Thyroid gland (tissue), 4 donors: ENCODE measurements at regions of chr16 and their contacts with region 1.

Region 1: GRCh38 chr16:4957720-4958509 is at the start of gene SEC14L5:
- DNase-seq: peak; percentile 99
- H3K4me3 ChIP-seq: peak within 1 kb of the TSS in 1 of 3 donors; percentile 18
- H3K27ac ChIP-seq: peak within 1 kb of the TSS in 1 of 3 donors; percentile 19
- H3K4me1 ChIP-seq: peaks cover 4 to 5% of the 10 kb centered on the region in 2 donors
- H3K27me3 ChIP-seq: no peaks in the 10 kb centered on the region
- CTCF ChIP-seq: no peak
- POLR2A ChIP-seq: peak in 1 of 2 donors; percentile 57
- total RNA-seq, gene SEC14L5: 0.11 to 0.33 (median 0.21) TPM

Region 2: GRCh38 chr16:4734063-4734729 is 223.7 kb before region 1 on chr16 and contains the starts of genes ANKS3 and DNAAF8:
- intact Hi-C with region 1: loop called (anchors 10 kb)
- DNase-seq: peak; percentile 98
- H3K4me3 ChIP-seq: peak within 1 kb of the TSS; percentile 77 to 90 (median 86)
- H3K27ac ChIP-seq: peak within 1 kb of the TSS in 2 of 3 donors; percentile 28 to 61
- H3K4me1 ChIP-seq: peaks cover 0 to 9% of the 10 kb centered on the region in 2 donors
- H3K27me3 ChIP-seq: no peaks in the 10 kb centered on the region
- CTCF ChIP-seq: no peak
- POLR2A ChIP-seq: peak in 1 of 2 donors; percentile 64
- total RNA-seq, gene ANKS3: 22.9 to 35.3 (median 25.1) TPM
- total RNA-seq, gene DNAAF8: 0.25 to 4.1 (median 2.8) TPM

Region 3: GRCh38 chr16:4802659-4803287 is 155.1 kb before region 1 on chr16:
- intact Hi-C with region 1: loop called (anchors 5 kb)
- DNase-seq: peak; percentile 92
- H3K4me3 ChIP-seq: peak overlapping the region; percentile 45 to 80 (median 58)
- H3K27ac ChIP-seq: peak overlapping the region in 2 of 3 donors; percentile 38 to 74
- H3K4me1 ChIP-seq: peaks cover 8% of the 10 kb centered on the region in 2 donors
- H3K27me3 ChIP-seq: no peaks in the 10 kb centered on the region
- CTCF ChIP-seq: no peak
- POLR2A ChIP-seq: peak in 1 of 2 donors; percentile 22

Region 4: GRCh38 chr16:4846891-4847773 is 110.8 kb before region 1 on chr16 and contains the starts of genes GLYR1 and UBN1:
- intact Hi-C with region 1: loop called (anchors 2 kb)
- DNase-seq: peak; percentile 100
- H3K4me3 ChIP-seq: peak within 1 kb of the TSS; percentile 79 to 96 (median 94)
- H3K27ac ChIP-seq: peak within 1 kb of the TSS; percentile 87 to 98 (median 95)
- H3K4me1 ChIP-seq: peaks cover 41% of the 10 kb centered on the region in 2 donors
- H3K27me3 ChIP-seq: no peaks in the 10 kb centered on the region
- CTCF ChIP-seq: peak in 1 of 6 experiments; percentile 10
- POLR2A ChIP-seq: peak; percentile 81 to 92
- total RNA-seq, gene GLYR1: 43.1 to 89.2 (median 75.5) TPM
- total RNA-seq, gene UBN1: 27.9 to 40.7 (median 30.5) TPM